ENCODE measurements at regions of chr10 and their contacts with region 1.

Region 1: DNA sequence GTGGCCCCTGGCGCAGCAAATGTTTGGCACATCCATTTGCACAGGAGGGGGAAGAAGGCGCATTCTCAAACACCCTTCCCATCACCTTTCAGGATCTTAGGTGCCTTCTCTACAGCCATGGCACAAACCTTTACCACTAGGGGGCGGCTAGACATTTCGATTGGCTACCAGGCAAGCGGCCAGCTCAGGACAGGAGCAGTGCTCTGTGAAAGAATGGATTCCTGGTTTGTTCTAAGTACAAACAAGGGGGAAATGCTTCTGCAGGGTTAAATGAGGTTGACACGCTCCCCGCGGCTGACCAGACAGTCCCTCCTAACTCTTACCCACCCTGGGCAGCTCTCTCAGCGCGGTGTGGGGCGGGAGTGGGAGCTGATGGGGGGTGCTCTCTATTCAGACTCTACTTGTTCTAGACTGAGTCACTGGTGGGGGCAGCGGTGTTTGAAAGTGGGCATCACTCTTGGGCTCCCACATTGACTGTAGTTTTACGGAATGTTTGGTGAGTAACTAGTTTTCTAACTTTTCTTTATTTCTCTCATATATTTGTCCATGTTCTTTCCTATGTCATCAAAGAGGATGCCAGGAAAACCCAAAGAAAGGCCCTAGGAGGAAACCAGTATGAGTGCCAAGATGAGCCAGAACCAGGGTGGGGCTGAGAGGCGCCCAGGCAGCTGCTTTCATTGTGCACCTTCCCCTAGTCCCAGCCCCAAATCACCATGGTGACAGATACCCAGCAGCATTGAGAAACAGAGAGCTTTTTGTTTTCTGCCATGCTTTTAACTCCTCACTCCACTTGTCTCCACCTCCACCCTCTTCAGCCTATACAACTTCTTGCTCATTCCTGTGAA is 61.4 kb upstream of the GPR158 start:
- DNase-seq: peak; percentile 66 to 83 (median 81)
- ATAC-seq: peak; percentile 93 to 98 (median 98)
- H3K4me3 ChIP-seq: no peak overlapping the region
- H3K27ac ChIP-seq: no peak overlapping the region
- H3K4me1 ChIP-seq: no peaks in the 10 kb centered on the region
- H3K27me3 ChIP-seq: no peaks in the 10 kb centered on the region
- CTCF ChIP-seq: peak; percentile 47 to 75 (median 60)

Region 2: DNA sequence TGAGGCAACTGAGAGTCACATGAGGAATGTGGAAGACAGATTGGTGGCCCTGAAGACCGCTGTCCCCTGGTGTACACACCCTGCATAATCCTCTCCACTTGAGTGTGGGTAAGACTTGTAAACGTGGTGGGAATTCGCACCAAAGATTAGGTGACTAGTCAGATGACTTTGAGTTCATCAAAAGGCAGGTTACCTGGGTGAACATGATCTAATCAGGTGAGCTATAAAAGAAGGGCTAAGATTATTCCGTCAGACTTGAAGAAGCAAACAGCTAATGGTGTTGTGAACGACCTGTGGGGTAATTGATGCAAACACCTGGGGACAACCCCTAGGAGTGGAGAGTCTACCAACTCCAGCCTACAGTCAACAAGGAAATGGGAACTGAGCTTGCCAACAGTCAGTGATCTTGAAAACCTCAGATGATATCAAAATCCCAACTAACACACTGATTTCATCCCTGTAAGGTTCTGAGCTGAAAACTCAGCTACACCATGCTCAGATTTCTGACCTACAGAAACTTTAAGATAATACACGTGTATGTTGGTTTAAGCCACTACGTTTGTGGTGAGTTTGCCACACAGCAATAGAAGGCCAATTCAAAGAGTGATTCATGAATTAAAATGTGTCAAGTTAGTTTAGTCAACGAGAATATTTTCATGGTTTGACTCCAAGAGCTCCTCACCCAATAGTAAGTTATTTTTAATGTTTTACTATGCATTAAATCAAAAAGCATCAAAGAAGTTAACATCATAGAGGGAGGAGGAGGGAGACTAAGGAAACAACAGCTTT is 177.7 kb before region 1 on chr10:
- intact Hi-C with region 1: no loop called
- DNase-seq: no peak
- ATAC-seq: no peak
- H3K4me3 ChIP-seq: no peak overlapping the region
- H3K27ac ChIP-seq: no peak overlapping the region
- H3K4me1 ChIP-seq: no peaks in the 10 kb centered on the region
- H3K27me3 ChIP-seq: no peaks in the 10 kb centered on the region
- CTCF ChIP-seq: no peak

Region 3: DNA sequence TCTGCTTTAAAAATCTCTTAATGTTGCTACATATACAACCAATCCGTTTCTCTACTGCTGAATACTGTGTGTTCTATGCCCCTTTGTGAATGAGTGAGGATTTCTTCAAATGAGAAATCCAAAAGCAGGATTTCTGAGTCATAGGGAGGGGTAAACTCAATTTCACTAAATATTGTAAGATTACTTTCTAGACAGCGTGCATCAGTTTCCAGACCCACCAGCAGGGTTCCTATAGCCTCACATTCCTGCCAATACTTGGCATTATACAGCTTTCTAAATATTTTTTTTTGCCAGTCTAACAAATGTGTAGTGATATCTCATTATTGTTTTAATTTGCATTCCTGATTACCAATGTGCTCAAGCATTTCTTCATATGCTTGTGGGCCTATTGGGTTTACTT is 96.9 kb after region 1 on chr10:
- intact Hi-C with region 1: loop called in 1 of 3 experiments (anchors 10 kb)
- DNase-seq: no peak
- ATAC-seq: no peak
- H3K4me3 ChIP-seq: no peak overlapping the region
- H3K27ac ChIP-seq: no peak overlapping the region
- H3K4me1 ChIP-seq: peaks cover 0 to 7% (median 0%) of the 10 kb centered on the region in 3 donors
- H3K27me3 ChIP-seq: no peaks in the 10 kb centered on the region
- CTCF ChIP-seq: no peak

Region 4: DNA sequence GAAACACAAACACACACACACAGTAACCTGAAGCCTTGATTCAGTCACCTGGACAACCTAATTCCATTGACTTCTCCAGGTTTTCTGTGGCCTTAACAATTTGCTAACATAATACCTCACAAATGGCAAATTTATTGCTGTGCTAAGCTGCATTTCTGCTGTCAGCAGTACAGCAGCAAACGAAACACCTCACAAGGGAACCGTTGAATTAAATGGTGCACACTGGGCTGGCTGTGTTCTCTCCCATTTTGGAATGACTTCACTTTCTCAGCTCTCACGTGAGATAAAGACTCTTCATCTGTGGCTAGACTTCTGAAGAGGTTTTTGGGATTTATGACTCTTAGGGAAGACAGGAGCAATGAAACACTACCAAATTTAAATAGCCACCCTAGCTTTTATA is 213.9 kb after region 1 on chr10:
- intact Hi-C with region 1: no loop called
- DNase-seq: no peak
- ATAC-seq: no peak
- H3K4me3 ChIP-seq: no peak overlapping the region
- H3K27ac ChIP-seq: no peak overlapping the region
- H3K4me1 ChIP-seq: no peaks in the 10 kb centered on the region
- H3K27me3 ChIP-seq: no peaks in the 10 kb centered on the region
- CTCF ChIP-seq: no peak

Region 5: GRCh38 chr10:25604591-25604990 is 491.2 kb after region 1 on chr10:
- intact Hi-C with region 1: no loop called
- DNase-seq: no peak
- ATAC-seq: no peak
- H3K4me3 ChIP-seq: no peak overlapping the region
- H3K27ac ChIP-seq: no peak overlapping the region
- H3K4me1 ChIP-seq: no peaks in the 10 kb centered on the region
- H3K27me3 ChIP-seq: no peaks in the 10 kb centered on the region
- CTCF ChIP-seq: no peak